ENCODE measurements at regions of chr1 and their contacts with region 1.

Region 1: DNA sequence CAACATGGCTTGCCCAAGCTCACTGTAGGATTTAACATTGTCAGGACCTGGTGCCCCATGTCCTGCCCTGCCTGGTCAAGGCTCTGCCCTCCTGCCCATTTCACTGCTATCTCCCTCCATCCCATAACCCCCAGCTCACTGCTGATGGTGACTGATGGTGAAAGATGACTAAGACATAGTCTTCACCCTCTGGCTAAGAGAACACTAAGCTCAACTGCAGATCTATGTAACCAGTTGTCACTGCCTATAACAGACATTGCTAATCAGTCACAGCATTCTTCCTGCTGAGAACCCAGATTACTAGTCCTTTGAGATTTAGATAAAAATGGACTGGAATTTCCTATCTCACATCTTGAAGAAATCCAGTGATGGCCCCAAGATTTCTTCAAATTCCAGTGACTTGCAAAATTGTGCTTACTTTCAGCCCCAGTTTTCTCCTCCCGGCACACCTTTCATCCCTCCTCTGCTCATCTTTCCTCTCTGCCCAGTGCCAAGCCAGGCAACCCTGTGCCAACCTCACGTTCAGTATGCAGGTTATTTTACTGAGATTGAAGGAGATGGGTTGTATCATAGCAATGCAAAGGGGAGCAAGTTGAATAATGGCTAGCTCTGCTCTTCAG is 8.0 kb upstream of the ZNF362 start:
- DNase-seq: no peak
- H3K4me3 ChIP-seq: no peak overlapping the region
- H3K4me1 ChIP-seq: peaks cover 7% of the 10 kb centered on the region
- H3K27me3 ChIP-seq: 0 out of 2 replicates have a peak, but pooled peaks cover 5% of the 10 kb centered on the region

Region 2: DNA sequence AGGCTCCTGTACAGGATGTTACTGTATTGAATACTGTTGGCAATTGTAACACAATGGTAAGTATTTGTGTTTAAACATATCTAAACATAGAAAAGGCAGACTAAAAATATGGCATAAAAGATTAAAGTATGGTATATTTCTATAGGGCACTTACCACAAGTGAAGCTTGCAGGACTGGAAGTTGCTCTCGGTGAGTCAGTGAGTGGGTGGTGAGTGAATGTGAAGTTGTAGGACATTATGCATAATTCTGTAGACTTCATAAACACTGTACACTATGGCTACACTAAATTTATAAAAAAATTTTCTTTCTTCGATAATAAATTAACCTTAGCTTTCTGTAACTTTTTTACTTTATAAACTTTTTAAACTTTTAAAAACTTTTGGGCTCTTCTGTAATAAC is 52.8 kb before region 1 on chr1:
- in situ Hi-C with region 1: loop called (anchors 5 kb)
- DNase-seq: no peak
- H3K4me3 ChIP-seq: no peak overlapping the region
- H3K4me1 ChIP-seq: no peaks in the 10 kb centered on the region
- H3K27me3 ChIP-seq: peaks cover 36% of the 10 kb centered on the region

Measured in HAP-1 (cell line).